ENCODE measurements at regions of chr19 and their contacts with region 1.

Region 1: GRCh38 chr19:8213827-8214672 is 4.9 kb downstream of the CERS4 start:
- DNase-seq: no peak
- ATAC-seq: no peak
- H3K4me3 ChIP-seq: no peak overlapping the region
- H3K27ac ChIP-seq: no peak overlapping the region
- H3K4me1 ChIP-seq: peaks cover 10% of the 10 kb centered on the region
- H3K27me3 ChIP-seq: no peaks in the 10 kb centered on the region
- CTCF ChIP-seq: no peak

Region 2: GRCh38 chr19:8163763-8164162 is 50.3 kb before region 1 on chr19:
- CTCF ChIA-PET with region 1: interaction called, 11 read pairs
- POLR2A ChIA-PET with region 1: no interaction called
- intact Hi-C with region 1: no loop called
- DNase-seq: peak; percentile 63
- ATAC-seq: peak; percentile 75
- H3K4me3 ChIP-seq: no peak overlapping the region
- H3K27ac ChIP-seq: no peak overlapping the region
- H3K4me1 ChIP-seq: peaks cover 17% of the 10 kb centered on the region
- H3K27me3 ChIP-seq: no peaks in the 10 kb centered on the region
- CTCF ChIP-seq: no peak

Region 3: DNA sequence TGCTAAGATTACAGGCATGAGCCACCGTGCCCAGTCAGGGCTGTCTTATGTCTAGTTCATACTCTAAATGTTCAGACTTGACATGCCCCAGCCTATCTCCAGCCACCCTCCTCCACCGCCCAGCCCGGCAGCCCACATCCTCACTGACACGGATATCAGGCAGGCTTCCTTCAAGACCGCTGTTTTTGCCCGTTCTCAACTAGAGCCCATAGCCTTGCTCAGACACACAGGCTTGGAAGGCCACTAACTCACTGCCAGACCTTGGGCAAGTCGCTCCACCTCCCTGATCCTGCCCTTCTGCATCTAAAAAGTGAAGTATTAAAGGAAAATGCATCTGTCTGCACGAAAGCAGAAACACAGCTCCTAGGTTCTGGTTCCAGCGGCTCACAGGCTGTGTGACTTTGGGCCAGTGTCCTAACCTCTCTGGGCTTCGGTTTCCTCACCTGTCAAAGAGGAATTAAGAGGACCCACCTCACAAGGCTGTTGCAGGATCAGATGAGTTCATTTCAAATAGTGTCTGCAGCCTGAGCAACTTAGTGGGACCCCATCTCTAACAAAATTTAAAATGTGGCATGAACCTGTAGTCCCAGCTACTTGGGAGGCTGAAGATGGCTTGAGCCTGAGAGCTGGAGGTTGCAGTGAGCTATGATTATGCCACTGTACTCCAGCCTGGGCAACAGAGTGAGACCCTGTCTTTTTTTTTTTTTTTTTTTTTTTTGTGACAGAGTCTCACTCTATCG is 19.4 kb before region 1 on chr19:
- CTCF ChIA-PET with region 1: no interaction called
- POLR2A ChIA-PET with region 1: no interaction called
- intact Hi-C with region 1: no loop called
- DNase-seq: no peak
- ATAC-seq: no peak
- H3K4me3 ChIP-seq: no peak overlapping the region
- H3K27ac ChIP-seq: no peak overlapping the region
- H3K4me1 ChIP-seq: no peaks in the 10 kb centered on the region
- H3K27me3 ChIP-seq: no peaks in the 10 kb centered on the region
- CTCF ChIP-seq: no peak

Measured in PC-3 (cell line).